Heart right ventricle (tissue), 16 donors: ENCODE measurements at regions of chr20 and their contacts with region 1.

Region 1: GRCh38 chr20:22368235-22368634 is 216.1 kb downstream of the FOXA2 start:
- DNase-seq: no peak
- ATAC-seq: no peak
- H3K4me3 ChIP-seq: no peak overlapping the region
- H3K27ac ChIP-seq: no peak overlapping the region
- H3K4me1 ChIP-seq: no peaks in the 10 kb centered on the region
- H3K27me3 ChIP-seq: peaks cover 0 to 45% (median 17%) of the 10 kb centered on the region in 7 donors
- CTCF ChIP-seq: no peak

Region 2: DNA sequence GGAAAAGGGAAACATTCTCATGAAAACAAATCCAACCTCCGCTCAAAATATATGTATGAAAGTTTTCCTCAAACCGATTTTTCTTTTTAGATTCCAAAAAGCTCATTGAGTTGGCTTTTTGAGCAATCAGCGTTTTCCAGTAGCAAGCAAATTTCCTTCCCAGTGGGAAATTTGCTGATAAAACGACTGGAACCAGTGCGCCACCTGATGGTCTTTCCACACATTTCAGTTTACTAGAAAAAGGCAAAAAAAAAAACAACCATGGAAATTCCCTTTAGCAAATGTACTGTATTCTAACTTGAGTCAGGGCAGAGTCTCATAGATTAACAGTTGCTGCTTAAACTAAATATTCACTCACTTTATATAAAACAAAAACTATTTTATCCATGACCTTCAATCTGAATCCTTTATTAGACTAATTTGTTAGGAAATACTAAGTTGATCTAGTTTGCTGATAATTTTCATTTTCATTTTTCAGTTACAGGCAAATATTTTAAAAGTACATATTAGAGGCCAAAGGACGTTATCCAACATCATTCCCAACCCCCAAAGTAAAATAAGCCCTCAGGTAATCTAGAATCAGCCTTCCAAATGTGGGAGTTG is 55.4 kb before region 1 on chr20:
- intact Hi-C with region 1: loop called in 1 of 10 experiments (anchors 5 kb)
- DNase-seq: peak in 1 of 2 donors; percentile 9
- ATAC-seq: no peak
- H3K4me3 ChIP-seq: no peak overlapping the region
- H3K27ac ChIP-seq: no peak overlapping the region
- H3K4me1 ChIP-seq: no peaks in the 10 kb centered on the region
- H3K27me3 ChIP-seq: peaks cover 0 to 46% (median 30%) of the 10 kb centered on the region in 7 donors
- CTCF ChIP-seq: peak in 8 of 9 donors; percentile 28 to 76 (median 63)

Region 3: DNA sequence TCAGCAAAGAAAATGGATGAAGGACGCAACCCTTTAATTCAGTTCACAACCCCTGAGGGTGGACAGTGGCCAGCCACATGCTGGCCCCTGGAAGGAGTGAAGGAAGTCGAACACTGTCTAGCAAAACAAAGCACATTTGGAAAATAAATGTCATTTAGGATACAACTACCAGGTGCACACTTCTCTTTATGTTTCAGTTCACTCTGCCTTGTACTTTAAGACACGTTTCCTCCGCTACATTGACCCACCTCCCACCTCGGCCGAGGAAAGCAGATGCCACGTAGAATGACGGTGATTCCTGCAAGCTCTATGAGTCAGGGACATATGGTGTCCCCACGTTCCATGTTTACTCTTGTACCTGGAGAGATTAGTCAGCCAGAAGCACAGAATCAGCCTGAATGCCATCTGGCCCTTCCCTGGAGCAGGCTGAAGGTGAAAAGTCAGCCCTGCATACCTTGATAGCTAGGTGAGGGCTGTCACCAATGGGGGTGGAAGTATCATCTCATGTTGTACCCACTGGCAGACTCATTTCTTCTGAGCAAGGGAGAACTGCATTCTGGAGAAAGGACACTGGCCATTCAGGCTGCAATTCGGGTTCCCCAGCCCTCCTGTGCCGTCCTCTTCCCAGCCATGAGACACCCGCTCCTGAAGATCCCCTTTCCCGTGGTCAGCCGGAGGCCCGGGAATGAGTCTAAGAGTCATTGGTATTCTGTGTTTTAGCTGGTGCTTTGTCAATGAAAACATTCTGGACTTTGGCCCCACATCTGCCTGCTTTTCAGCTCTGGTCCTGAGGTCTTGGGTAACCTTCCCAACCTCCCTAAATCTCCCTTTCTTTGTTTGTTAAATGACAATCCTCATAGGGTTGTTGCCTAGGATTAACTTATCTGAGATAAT is 155.5 kb after region 1 on chr20:
- intact Hi-C with region 1: no loop called
- DNase-seq: no peak
- ATAC-seq: no peak
- H3K4me3 ChIP-seq: no peak overlapping the region
- H3K27ac ChIP-seq: no peak overlapping the region
- H3K4me1 ChIP-seq: no peaks in the 10 kb centered on the region
- H3K27me3 ChIP-seq: peaks cover 0 to 63% (median 20%) of the 10 kb centered on the region in 7 donors
- CTCF ChIP-seq: no peak